ENCODE measurements at regions of chr2 and their contacts with region 1.

Region 1: DNA sequence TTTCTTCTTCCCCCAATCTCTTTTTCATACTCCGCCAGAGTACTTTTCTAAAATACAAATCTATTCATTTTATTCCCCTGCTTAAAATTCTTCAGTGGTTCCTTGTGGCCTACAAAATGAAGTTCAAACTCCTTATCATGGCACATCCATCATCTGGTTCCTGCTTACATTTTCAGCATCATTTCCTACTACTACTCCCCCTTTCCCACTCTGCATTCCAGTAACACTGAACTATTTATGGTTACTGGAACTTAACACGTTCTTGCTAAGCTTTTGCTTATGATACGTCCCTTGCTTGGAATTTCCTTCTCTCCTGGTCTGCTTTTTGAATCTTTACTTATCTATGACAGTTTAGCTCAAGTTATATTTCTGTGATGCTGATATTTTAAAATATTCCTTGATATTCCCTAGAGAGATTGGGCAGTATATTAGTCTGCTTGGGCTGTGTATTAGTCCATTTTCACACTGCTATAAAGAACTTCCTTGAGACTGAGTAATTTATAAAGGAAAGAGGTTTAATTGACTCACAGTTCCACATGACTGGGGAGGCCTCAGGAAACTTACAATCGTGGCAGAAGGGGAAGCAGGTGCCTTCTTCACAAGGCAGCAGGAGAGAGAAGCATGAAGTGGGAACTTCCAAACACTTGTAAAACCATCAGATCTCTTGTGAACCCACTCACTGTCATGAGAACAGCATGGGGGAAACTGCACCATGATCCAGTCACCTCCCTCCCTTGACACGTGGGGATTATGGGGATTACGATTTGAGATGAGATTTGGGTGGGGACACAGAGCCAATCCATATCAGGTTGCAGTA is 53.2 kb downstream of the BMPR2 start:
- DNase-seq: no peak
- ATAC-seq: no peak
- H3K4me3 Mint-ChIP-seq: no peak overlapping the region
- H3K27ac Mint-ChIP-seq: no peak overlapping the region
- H3K4me1 Mint-ChIP-seq: peaks cover 5% of the 10 kb centered on the region
- H3K27me3 Mint-ChIP-seq: no peaks in the 10 kb centered on the region

Region 2: DNA sequence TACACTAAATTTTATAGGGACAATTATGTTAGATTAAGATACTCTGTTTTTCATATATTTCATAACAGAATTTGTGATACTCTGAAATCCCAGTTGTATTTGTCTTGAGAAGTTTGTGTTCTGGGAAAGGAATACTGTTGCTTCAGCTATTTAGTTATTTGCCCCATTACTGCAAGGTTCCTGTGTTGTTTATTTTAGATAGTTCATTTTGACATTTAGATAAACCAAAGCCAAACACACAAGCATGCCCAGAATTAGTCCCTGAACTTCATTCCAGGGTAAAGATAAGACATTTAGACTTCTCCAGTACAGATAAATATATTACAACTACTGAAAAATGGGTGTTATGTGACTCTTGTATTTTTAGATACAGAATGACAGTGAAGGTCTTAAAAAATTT is 21.4 kb after region 1 on chr2:
- CTCF ChIA-PET with region 1: no interaction called
- POLR2A ChIA-PET with region 1: interaction called, 5 read pairs
- intact Hi-C with region 1: loop called (anchors 1 kb)
- DNase-seq: no peak
- ATAC-seq: no peak
- H3K4me3 Mint-ChIP-seq: no peak overlapping the region
- H3K27ac Mint-ChIP-seq: no peak overlapping the region
- H3K4me1 Mint-ChIP-seq: no peaks in the 10 kb centered on the region
- H3K27me3 Mint-ChIP-seq: no peaks in the 10 kb centered on the region

Region 3: DNA sequence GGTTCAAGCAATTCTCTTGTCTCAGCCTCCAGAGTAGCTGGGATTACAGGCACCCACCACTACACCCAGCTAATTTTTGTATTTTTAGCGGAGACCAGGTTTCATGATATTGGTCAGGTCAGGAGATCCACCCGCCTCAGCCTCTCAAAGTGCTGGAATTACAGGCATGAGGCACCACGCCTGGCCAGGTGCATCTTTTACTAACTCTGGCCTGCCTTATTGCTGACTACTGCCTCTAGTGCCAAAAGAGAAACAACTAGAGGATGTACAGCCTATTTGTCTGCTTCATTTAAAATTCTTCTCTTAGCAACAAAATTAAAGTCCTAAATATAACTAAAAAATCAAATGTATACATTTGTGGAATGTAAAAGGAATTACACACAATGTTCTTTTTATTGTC is 62.1 kb after region 1 on chr2:
- CTCF ChIA-PET with region 1: no interaction called
- POLR2A ChIA-PET with region 1: no interaction called
- intact Hi-C with region 1: no loop called
- DNase-seq: no peak
- ATAC-seq: no peak
- H3K4me3 Mint-ChIP-seq: no peak overlapping the region
- H3K27ac Mint-ChIP-seq: no peak overlapping the region
- H3K4me1 Mint-ChIP-seq: no peaks in the 10 kb centered on the region
- H3K27me3 Mint-ChIP-seq: no peaks in the 10 kb centered on the region

Measured in activated CD4-positive, alpha-beta T cell treated with anti-CD3 and anti-CD28 coated beads for 36 hours (primary cell).